Activated CD4-positive, alpha-beta memory T cell treated with anti-CD3 and anti-CD28 coated beads, Interleukin-2, amount 10 ng/mL, durations not matched to agents 7 days and 5 days (primary cell): ENCODE measurements at regions of chr18 and their contacts with region 1.

Region 1: GRCh38 chr18:3665780-3666525 is 216.0 kb downstream of the TGIF1 start:
- DNase-seq: peak; percentile 76
- H3K4me3 Mint-ChIP-seq: no peak overlapping the region
- H3K27ac Mint-ChIP-seq: no peak overlapping the region
- H3K4me1 Mint-ChIP-seq: peaks cover 26% of the 10 kb centered on the region
- H3K27me3 Mint-ChIP-seq: no peaks in the 10 kb centered on the region

Region 2: DNA sequence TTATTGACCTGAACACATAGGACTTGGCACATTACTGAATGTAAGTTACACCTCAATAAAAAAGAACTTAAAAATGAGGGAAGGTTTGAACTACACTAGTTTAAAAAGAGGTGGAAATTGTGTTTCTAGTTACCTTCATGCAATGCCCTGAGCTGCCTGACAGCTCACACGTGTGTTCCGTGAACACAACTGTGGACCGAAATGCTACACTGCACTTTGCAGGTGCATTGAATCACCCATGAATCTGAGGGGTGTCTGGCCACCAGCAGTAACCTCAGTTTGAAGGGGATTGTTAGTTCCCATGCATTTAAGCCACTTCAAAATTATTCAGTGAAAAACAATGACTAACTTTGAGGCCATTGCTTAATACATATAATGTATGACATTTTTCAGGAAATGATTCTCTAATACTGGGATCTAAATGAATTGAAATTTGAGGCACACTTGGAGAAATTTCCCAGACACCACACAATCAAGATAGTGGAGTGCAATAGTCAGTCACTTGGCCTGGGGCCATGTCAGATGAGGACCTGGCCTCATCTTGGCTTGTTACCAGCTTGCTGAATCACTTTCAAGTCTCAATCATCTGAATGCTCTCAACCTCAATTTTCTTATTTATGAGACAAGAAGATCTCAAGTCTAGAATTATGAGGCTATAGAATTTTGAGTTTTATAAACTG is 344.7 kb before region 1 on chr18:
- CTCF ChIA-PET with region 1: interaction called, 10 read pairs
- POLR2A ChIA-PET with region 1: no interaction called
- DNase-seq: no peak
- H3K4me3 Mint-ChIP-seq: no peak overlapping the region
- H3K27ac Mint-ChIP-seq: no peak overlapping the region
- H3K4me1 Mint-ChIP-seq: peaks cover 25% of the 10 kb centered on the region
- H3K27me3 Mint-ChIP-seq: peaks cover 9% of the 10 kb centered on the region

Region 3: DNA sequence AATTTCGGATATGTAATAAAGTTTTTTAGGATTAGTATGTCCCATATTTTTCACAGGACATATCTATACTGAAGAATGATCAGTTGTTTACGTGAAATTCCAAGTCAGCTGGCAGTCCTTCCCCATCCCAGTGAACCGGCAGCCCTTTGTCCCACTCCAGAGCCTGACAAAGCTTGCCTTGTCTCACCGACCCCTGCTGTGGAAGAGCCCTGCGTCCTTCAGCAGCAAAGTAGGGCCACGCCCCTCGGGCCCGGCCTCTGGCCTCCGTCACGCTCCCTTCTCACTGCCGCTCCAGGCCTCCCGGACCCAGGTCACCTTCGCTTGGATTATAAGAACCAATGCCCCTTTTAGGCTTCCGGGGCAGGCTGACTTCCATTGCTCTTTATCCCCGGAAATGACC is 305.7 kb before region 1 on chr18:
- CTCF ChIA-PET with region 1: no interaction called
- POLR2A ChIA-PET with region 1: no interaction called
- DNase-seq: no peak
- H3K4me3 Mint-ChIP-seq: no peak overlapping the region
- H3K27ac Mint-ChIP-seq: no peak overlapping the region
- H3K4me1 Mint-ChIP-seq: peaks cover 14% of the 10 kb centered on the region
- H3K27me3 Mint-ChIP-seq: no peaks in the 10 kb centered on the region

Region 4: DNA sequence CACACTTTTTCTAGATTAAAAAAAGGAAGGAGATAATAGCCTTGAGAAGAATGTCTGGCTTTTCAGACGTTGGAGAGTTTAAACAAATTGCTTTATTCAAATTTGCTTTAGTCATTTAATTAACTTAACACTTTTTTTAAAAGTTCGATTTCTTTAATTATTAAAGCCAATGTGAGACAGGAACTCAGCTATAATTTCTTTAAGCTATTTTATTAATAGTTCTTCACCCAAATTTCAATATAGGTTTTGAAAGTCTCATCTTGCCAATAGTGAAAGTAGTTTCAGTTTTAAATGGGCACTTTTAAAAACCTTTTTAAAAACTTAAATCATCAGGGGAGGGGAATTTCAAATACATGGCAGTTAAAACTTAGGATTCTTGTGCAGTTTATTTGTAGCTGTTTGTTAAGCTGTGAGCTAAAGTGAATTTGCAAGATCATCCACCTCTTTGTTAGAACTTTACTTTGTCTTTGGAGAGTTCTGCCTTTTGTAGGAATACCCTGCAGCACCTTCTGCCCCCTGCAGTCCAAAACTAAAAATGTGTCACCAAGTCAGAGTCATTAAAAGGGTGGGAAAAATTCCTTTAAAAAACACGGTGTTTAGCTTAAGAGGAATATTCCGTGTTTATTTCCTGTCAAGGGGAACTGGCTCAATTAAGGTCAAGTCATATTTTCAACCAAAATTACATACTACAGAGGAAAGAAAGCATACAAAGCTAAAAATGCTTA is 211.4 kb before region 1 on chr18:
- CTCF ChIA-PET with region 1: interaction called, 41 read pairs
- POLR2A ChIA-PET with region 1: interaction called, 5 read pairs
- DNase-seq: peak; percentile 33
- H3K4me3 Mint-ChIP-seq: peak overlapping the region; percentile 92
- H3K27ac Mint-ChIP-seq: peak overlapping the region; percentile 96
- H3K4me1 Mint-ChIP-seq: peaks cover 65% of the 10 kb centered on the region
- H3K27me3 Mint-ChIP-seq: no peaks in the 10 kb centered on the region

Region 5: DNA sequence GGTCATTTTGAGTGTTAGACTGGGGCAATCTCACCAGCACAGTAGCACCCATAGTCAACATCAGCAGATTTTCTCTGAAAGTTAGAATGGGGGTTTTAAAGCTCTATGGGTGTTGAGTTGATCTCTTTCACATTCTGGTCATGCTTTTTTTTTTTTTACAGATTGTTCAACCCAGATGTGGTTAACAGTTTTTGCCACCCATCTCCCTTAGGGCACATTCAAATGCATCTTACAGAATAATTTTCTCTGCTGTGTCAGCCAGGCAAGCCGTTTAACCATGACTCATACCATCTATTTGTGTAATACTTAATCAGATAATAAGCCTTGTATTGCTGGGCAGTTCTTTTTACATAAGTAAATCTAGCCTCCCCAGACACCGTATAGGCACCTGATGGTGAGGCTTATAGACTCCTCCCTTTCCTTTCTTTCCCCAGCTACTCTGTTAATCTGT is 154.0 kb before region 1 on chr18:
- CTCF ChIA-PET with region 1: no interaction called
- POLR2A ChIA-PET with region 1: no interaction called
- DNase-seq: peak; percentile 28
- H3K4me3 Mint-ChIP-seq: no peak overlapping the region
- H3K27ac Mint-ChIP-seq: peak overlapping the region; percentile 55
- H3K4me1 Mint-ChIP-seq: peaks cover 21% of the 10 kb centered on the region
- H3K27me3 Mint-ChIP-seq: no peaks in the 10 kb centered on the region

Region 6: GRCh38 chr18:3593904-3594661 is 71.9 kb before region 1 on chr18:
- CTCF ChIA-PET with region 1: interaction called, 49 read pairs
- POLR2A ChIA-PET with region 1: interaction called, 40 read pairs
- DNase-seq: peak; percentile 91
- H3K4me3 Mint-ChIP-seq: peak overlapping the region; percentile 92
- H3K27ac Mint-ChIP-seq: peak overlapping the region; percentile 98
- H3K4me1 Mint-ChIP-seq: peaks cover 50% of the 10 kb centered on the region
- H3K27me3 Mint-ChIP-seq: no peaks in the 10 kb centered on the region